ENCODE measurements at regions of chr7 and their contacts with region 1.

Region 1: GRCh38 chr7:54788664-54789063 is 29.7 kb upstream of the SEC61G start:
- DNase-seq: peak; percentile 73
- H3K4me3 ChIP-seq: no peak overlapping the region
- H3K27ac ChIP-seq: 0 out of 4 replicates have a peak overlapping the region, but pooled peaks of 1 of the 2 experiments have one; percentile 6
- H3K4me1 ChIP-seq: peaks cover 0 to 4% of the 10 kb centered on the region in 2 experiments; a peak in 1 of 4 replicates
- H3K27me3 ChIP-seq: no peaks in the 10 kb centered on the region
- CTCF ChIP-seq: peak; percentile 96
- EP300 ChIP-seq: no peak
- RAD21 ChIP-seq: peak; percentile 97

Region 2: GRCh38 chr7:54802841-54803240 is 14.2 kb after region 1 on chr7:
- CTCF ChIA-PET with region 1: interaction called, 18 read pairs
- POLR2A ChIA-PET with region 1: no interaction called
- DNase-seq: no peak
- H3K4me3 ChIP-seq: no peak overlapping the region
- H3K27ac ChIP-seq: no peak overlapping the region
- H3K4me1 ChIP-seq: 0 out of 4 replicates have a peak, but pooled peaks cover 0 to 7% of the 10 kb centered on the region in 2 experiments
- H3K27me3 ChIP-seq: no peaks in the 10 kb centered on the region
- CTCF ChIP-seq: no peak
- EP300 ChIP-seq: 0 out of 4 replicates have a peak, but pooled peaks of 1 of the 2 experiments have one; percentile 39
- RAD21 ChIP-seq: no peak

Region 3: DNA sequence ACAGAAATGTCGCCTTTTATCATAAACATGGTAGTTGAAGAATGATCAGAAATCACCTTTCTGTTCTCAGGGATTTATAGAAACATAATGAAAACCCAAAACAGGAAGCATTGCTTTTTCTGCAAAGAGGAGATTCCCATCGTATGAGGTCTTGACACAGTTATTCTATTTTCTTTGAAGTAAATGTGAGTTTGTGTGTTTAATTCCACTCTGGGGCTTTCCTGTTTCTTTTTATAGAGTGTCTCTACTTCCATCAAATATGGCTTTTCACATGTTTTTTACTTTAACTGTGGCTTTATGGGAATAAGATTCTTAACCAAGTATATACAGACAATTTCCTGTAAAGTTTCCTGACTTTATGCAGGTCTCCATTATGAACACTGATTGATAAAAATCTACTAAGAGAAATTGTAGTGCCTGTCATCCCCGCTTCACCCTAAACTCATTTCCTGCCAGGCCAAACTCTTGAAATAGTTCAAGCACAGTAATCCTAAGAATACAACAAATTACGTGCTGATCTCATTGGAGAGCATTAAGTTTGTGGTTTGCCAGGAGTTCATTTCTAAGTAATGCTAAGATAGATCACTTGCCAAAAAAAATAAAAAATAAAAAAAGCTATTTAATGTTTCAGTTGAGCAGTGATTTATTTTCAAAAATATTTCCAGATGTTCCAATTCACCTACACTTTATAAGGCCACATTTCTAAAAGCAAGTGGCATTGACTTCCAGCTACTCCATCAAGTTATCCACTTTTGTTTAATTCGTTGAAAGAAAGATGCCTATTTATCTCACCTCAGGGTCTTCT is 22.6 kb after region 1 on chr7:
- CTCF ChIA-PET with region 1: interaction called, 11 read pairs
- POLR2A ChIA-PET with region 1: no interaction called
- DNase-seq: no peak
- H3K4me3 ChIP-seq: no peak overlapping the region
- H3K27ac ChIP-seq: peak overlapping the region; percentile 71 to 85; a peak in 3 of 4 replicates
- H3K4me1 ChIP-seq: peaks cover 6 to 25% of the 10 kb centered on the region in 2 experiments
- H3K27me3 ChIP-seq: no peaks in the 10 kb centered on the region
- CTCF ChIP-seq: no peak
- EP300 ChIP-seq: peak; percentile 69 to 93
- RAD21 ChIP-seq: no peak

Region 4: GRCh38 chr7:54839538-54840213 is 51.0 kb after region 1 on chr7:
- CTCF ChIA-PET with region 1: interaction called, 14 read pairs
- POLR2A ChIA-PET with region 1: no interaction called
- DNase-seq: peak; percentile 78
- H3K4me3 ChIP-seq: no peak overlapping the region
- H3K27ac ChIP-seq: no peak overlapping the region
- H3K4me1 ChIP-seq: peaks cover 3 to 6% of the 10 kb centered on the region in 2 experiments; a peak in 3 of 4 replicates
- H3K27me3 ChIP-seq: no peaks in the 10 kb centered on the region
- CTCF ChIP-seq: peak; percentile 91
- EP300 ChIP-seq: no peak
- RAD21 ChIP-seq: peak; percentile 82

Region 5: DNA sequence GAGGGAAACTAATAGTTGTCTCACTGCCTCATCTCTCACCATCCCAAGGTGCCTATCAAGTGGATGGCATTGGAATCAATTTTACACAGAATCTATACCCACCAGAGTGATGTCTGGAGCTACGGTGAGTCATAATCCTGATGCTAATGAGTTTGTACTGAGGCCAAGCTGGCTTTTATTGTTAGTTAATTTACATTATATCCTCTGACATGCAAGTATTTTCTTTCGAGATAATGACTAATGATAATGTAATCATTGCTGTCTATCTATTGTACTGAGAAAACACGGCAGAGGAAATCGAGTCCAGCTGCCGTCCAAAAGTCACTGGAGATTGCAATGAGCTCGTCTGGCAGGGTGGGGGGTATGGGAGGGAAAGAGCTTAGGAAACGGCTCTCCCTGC is 404.1 kb after region 1 on chr7:
- CTCF ChIA-PET with region 1: interaction called, 14 read pairs
- POLR2A ChIA-PET with region 1: no interaction called
- DNase-seq: peak; percentile 74
- H3K4me3 ChIP-seq: no peak overlapping the region
- H3K27ac ChIP-seq: peak overlapping the region; percentile 91 to 95
- H3K4me1 ChIP-seq: peaks cover 45 to 48% of the 10 kb centered on the region in 2 experiments
- H3K27me3 ChIP-seq: no peaks in the 10 kb centered on the region
- CTCF ChIP-seq: no peak
- EP300 ChIP-seq: peak; percentile 99 to 100
- RAD21 ChIP-seq: no peak; the same call in 1 of the 2 replicates

Measured in SK-N-SH (cell line).